ENCODE measurements at regions of chr15 and their contacts with region 1.

Region 1: DNA sequence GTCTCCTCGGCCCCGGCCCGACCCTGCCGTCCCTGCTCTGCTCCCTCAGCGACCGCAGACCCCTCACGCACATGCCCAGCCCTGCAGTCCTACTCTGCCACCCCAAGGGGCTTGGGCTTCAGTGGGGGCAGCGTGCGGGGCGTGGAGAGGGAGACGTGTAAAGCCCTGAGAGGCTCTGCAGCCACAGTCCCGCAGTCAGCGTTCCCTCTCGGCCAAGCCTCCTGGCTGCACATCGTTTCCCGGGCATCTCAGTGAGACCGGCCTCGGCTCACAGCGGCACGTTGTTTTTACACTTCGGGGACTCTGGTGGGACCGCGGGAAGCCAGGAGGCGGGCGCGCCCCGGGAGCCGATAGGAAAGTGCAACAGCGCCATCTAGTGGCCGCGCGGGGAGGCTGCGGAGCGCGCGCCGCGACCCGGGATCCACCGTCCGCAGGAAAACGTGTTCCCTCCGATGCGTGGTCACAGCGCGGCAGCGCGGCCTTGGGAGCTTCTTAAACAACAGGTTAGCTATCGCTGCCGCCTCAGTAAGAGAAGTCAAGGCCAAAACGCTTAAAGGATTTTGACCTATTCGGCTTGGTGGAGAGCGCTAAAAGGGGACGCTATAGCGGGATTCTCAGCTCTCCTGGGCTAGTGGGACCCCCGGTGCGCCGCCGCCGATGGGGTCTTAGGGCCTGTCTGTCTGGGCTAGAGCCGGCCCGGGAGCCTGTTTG is 226.8 kb upstream of the IGF1R start:
- DNase-seq: peak; percentile 50
- H3K4me3 Mint-ChIP-seq: peak overlapping the region; percentile 1
- H3K27ac Mint-ChIP-seq: no peak overlapping the region
- H3K4me1 Mint-ChIP-seq: no peaks in the 10 kb centered on the region
- H3K27me3 Mint-ChIP-seq: peaks cover 34% of the 10 kb centered on the region

Region 2: GRCh38 chr15:98292442-98293240 is 128.9 kb before region 1 on chr15:
- intact Hi-C with region 1: loop called (anchors 5 kb)
- DNase-seq: peak; percentile 17
- H3K4me3 Mint-ChIP-seq: no peak overlapping the region
- H3K27ac Mint-ChIP-seq: no peak overlapping the region
- H3K4me1 Mint-ChIP-seq: no peaks in the 10 kb centered on the region
- H3K27me3 Mint-ChIP-seq: peaks cover 25% of the 10 kb centered on the region

Region 3: GRCh38 chr15:98311566-98312188 is 109.9 kb before region 1 on chr15:
- intact Hi-C with region 1: loop called (anchors 1 kb)
- DNase-seq: peak; percentile 52
- H3K4me3 Mint-ChIP-seq: no peak overlapping the region
- H3K27ac Mint-ChIP-seq: no peak overlapping the region
- H3K4me1 Mint-ChIP-seq: no peaks in the 10 kb centered on the region
- H3K27me3 Mint-ChIP-seq: no peaks in the 10 kb centered on the region

Region 4: GRCh38 chr15:98358971-98359370 is 62.6 kb before region 1 on chr15:
- intact Hi-C with region 1: no loop called
- DNase-seq: no peak
- H3K4me3 Mint-ChIP-seq: no peak overlapping the region
- H3K27ac Mint-ChIP-seq: no peak overlapping the region
- H3K4me1 Mint-ChIP-seq: no peaks in the 10 kb centered on the region
- H3K27me3 Mint-ChIP-seq: no peaks in the 10 kb centered on the region

Measured in activated T-helper 2 cell treated with anti-CD3 and anti-CD28 coated beads, Interferon-gamma antibody, Interleukin-2, Interleukin-4, amounts not matched to agents 10 μg/mL and 5 μg/mL and 100 μg/mL, durations not matched to agents 14 hours and 24 hours and 36 hours (primary cell).